ENCODE measurements at regions of chr14 and their contacts with region 1.

Region 1: DNA sequence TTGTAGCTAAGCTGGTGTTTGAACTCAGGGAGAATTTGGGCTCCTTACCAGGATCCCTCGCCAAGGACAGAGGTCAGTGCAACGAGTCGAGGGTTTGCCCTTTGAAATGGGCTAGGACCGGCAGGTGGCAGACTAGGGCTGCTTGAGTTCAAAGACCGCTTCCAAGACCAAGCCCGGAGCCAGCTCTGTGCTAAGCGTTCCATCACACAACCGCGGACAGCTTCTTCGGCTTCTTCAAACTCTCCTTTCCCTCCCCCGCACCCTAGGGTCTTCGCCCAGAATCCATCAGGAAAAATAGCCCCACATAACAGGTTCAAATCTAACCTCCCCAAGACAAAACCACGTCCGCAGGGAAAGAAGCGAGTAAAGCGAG is 705 bp upstream of the FLVCR2 start:
- DNase-seq: peak; percentile 57 to 81
- ATAC-seq: peak; percentile 89 to 92 (median 92)
- H3K4me3 ChIP-seq: peak overlapping the region; percentile 38
- H3K4me3 Mint-ChIP-seq: peak overlapping the region; percentile 95
- H3K27ac ChIP-seq: no peak overlapping the region
- H3K27ac Mint-ChIP-seq: peak overlapping the region; percentile 39 to 60
- H3K4me1 ChIP-seq: peaks cover 16% of the 10 kb centered on the region
- H3K4me1 Mint-ChIP-seq: peaks cover 20 to 22% of the 10 kb centered on the region in 2 donors
- H3K27me3 ChIP-seq: no peaks in the 10 kb centered on the region
- H3K27me3 Mint-ChIP-seq: no peaks in the 10 kb centered on the region
- CTCF ChIP-seq: peak; percentile 70

Region 2: DNA sequence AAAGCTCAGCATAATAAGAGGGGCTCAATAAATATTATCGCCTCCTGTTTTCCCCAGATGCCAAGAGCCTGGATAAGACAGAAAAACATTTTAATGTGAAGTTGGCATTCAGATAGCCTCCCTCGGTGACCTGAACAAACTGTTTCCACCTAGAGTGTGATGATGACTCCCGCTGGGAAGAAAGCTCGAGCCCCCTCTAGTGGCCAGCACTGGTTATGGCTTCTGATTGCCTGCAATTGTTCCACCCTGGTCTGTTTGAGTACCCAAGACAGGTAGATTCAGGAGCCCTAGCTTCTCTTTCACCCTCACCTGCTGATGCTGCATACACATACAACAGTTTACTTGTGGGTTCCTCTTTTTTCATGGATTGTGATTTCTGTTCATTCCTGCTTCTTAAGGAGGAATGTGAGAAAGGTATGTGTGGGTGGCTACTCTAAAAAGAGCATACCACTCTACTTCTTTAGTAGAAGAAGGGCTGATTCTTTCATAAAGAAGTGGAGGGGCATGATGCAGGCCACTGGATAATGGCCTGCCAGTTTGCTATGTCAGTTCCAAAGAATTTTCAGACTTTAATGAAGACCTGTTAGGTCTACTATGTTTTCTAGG is 76.5 kb after region 1 on chr14:
- intact Hi-C with region 1: loop called (anchors 1 kb)
- DNase-seq: peak; percentile 72 to 87
- ATAC-seq: peak; percentile 91 to 98 (median 96)
- H3K4me3 ChIP-seq: no peak overlapping the region
- H3K4me3 Mint-ChIP-seq: no peak overlapping the region
- H3K27ac ChIP-seq: no peak overlapping the region
- H3K27ac Mint-ChIP-seq: peak overlapping the region in 1 of 2 donors; percentile 72
- H3K4me1 ChIP-seq: no peaks in the 10 kb centered on the region
- H3K4me1 Mint-ChIP-seq: peaks cover 6 to 7% of the 10 kb centered on the region in 2 donors
- H3K27me3 ChIP-seq: no peaks in the 10 kb centered on the region
- H3K27me3 Mint-ChIP-seq: no peaks in the 10 kb centered on the region
- CTCF ChIP-seq: peak; percentile 95

Measured in natural killer cell (primary cell).